ENCODE measurements at regions of chr6 and their contacts with region 1.

Region 1: GRCh38 chr6:112043032-112044007 is 10.6 kb upstream of the CCN6 start:
- DNase-seq: peak; percentile 96
- ATAC-seq: peak; percentile 91
- H3K4me3 Mint-ChIP-seq: peak overlapping the region; percentile 93
- H3K27ac Mint-ChIP-seq: peak overlapping the region; percentile 98
- H3K4me1 Mint-ChIP-seq: peaks cover 50% of the 10 kb centered on the region
- H3K27me3 Mint-ChIP-seq: no peaks in the 10 kb centered on the region

Region 2: GRCh38 chr6:111605100-111605751 is 438.1 kb before region 1 on chr6:
- CTCF ChIA-PET with region 1: interaction called, 4 read pairs
- POLR2A ChIA-PET with region 1: no interaction called
- intact Hi-C with region 1: loop called (anchors 1 to 10 kb)
- DNase-seq: peak; percentile 52
- ATAC-seq: peak; percentile 45
- H3K4me3 Mint-ChIP-seq: peak overlapping the region; percentile 80
- H3K27ac Mint-ChIP-seq: peak overlapping the region; percentile 99
- H3K4me1 Mint-ChIP-seq: peaks cover 39% of the 10 kb centered on the region
- H3K27me3 Mint-ChIP-seq: no peaks in the 10 kb centered on the region

Region 3: DNA sequence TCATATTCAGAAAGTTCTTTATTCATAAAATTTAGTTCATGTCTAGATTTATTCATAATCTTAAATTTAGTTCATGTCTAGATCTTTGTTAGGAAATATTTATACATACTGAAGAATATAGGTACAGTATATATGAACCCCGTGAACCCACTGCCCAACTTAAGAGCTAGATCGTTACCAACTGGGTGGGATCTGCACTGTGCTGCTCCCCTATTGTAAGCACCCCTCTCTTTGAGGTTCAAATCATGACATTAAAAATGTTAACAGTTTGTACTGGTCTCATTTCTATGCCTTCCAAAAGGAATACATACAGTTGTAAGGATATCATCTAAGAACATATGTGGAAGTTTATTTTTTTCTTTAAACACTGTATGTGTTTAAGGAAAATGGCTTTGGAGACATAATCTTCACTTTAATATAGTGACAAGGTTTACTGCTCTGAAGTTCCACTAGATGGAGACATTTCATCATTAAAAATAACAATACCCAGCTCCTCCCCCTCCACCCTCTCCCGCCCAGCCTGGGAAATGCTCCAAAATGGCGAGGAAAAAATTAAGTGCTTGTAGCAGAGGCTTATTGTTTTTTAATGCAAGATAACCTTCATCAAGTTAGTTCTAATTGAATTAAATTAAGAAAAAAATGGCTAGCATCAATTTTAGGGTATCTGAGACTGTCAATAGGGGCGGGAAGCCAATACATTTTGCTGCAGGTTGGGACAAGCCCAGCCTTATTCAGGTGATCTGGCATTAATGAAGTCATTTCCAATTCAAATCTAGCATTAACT is 333.5 kb before region 1 on chr6:
- CTCF ChIA-PET with region 1: interaction called, 59 read pairs
- POLR2A ChIA-PET with region 1: no interaction called
- intact Hi-C with region 1: loop called (anchors 1 kb)
- DNase-seq: peak; percentile 73
- ATAC-seq: peak; percentile 81
- H3K4me3 Mint-ChIP-seq: no peak overlapping the region
- H3K27ac Mint-ChIP-seq: peak overlapping the region; percentile 88
- H3K4me1 Mint-ChIP-seq: peaks cover 58% of the 10 kb centered on the region
- H3K27me3 Mint-ChIP-seq: no peaks in the 10 kb centered on the region

Region 4: GRCh38 chr6:111873178-111874024 is 169.9 kb before region 1 on chr6 and contains the start of gene FYN:
- CTCF ChIA-PET with region 1: interaction called, 7 read pairs
- POLR2A ChIA-PET with region 1: interaction called, 3 read pairs
- intact Hi-C with region 1: loop called (anchors 1 kb)
- DNase-seq: peak; percentile 100
- ATAC-seq: peak; percentile 87
- H3K4me3 Mint-ChIP-seq: peak within 1 kb of the TSS; percentile 98
- H3K27ac Mint-ChIP-seq: peak within 1 kb of the TSS; percentile 91
- H3K4me1 Mint-ChIP-seq: peaks cover 35% of the 10 kb centered on the region
- H3K27me3 Mint-ChIP-seq: no peaks in the 10 kb centered on the region
- total RNA-seq, gene FYN: 345 to 504 TPM

Region 5: GRCh38 chr6:112010328-112010727 is 33.0 kb before region 1 on chr6:
- CTCF ChIA-PET with region 1: interaction called, 54 read pairs
- POLR2A ChIA-PET with region 1: no interaction called
- intact Hi-C with region 1: loop called (anchors 1 kb)
- DNase-seq: peak; percentile 42
- ATAC-seq: peak; percentile 82
- H3K4me3 Mint-ChIP-seq: no peak overlapping the region
- H3K27ac Mint-ChIP-seq: no peak overlapping the region
- H3K4me1 Mint-ChIP-seq: peaks cover 42% of the 10 kb centered on the region
- H3K27me3 Mint-ChIP-seq: no peaks in the 10 kb centered on the region

Region 6: DNA sequence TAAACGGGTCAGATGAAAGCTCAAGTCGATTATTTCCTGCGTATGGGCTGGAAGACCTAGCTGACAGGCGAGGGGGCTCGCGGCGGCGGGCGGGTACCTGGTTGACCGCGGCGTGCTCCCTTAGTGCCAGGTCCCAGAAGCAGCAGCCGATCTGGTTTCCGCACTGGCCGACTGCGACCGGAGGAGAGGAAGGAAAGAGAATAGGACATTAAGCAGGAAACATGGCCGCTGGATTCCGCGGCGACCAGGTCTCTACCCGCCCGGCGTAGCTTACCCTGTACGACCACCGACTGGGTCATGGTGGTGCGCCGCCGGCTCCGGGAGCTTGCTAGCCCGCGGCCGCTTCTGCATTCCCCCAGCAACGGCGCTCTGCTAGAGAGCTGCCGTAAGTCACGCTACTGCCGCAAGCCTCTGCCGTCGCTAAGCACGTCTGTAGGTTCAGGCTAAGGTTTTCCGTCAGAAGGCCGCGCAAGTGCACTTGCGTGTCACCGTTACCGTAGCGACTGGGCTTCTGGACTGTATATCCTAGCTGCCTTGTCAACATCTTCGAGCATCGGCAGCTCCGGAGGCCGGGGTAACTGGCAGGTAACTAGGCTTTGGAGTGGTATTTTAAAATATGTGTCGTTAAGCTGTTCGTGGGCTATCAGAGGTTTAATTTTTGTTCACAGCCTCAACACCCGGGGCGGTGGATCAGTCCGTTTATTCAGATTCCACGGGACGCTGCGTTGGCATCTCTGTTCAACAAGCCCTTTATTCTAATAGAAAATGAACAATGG is 44.0 kb after region 1 on chr6 and contains the starts of genes FAM229B and TUBE1:
- CTCF ChIA-PET with region 1: interaction called, 13 read pairs
- POLR2A ChIA-PET with region 1: no interaction called
- intact Hi-C with region 1: loop called in 1 of 2 experiments (anchors 2 kb)
- DNase-seq: peak; percentile 95
- ATAC-seq: peak; percentile 98
- H3K4me3 Mint-ChIP-seq: no peak within 1 kb of the TSS
- H3K27ac Mint-ChIP-seq: no peak within 1 kb of the TSS
- H3K4me1 Mint-ChIP-seq: peaks cover 11% of the 10 kb centered on the region
- H3K27me3 Mint-ChIP-seq: peaks cover 12% of the 10 kb centered on the region
- total RNA-seq, gene FAM229B: 6.4 to 7.3 TPM
- total RNA-seq, gene TUBE1: 41.8 to 44.4 TPM

Measured in activated CD4-positive, alpha-beta T cell treated with anti-CD3 and anti-CD28 coated beads for 36 hours (primary cell).